HepG2 (cell line): ENCODE measurements at regions of chr6 and their contacts with region 1.

Region 1: GRCh38 chr6:17700421-17701416 is 6.0 kb downstream of the NUP153 start:
- DNase-seq: no peak
- ATAC-seq: no peak
- H3K4me3 ChIP-seq: no peak overlapping the region
- H3K27ac ChIP-seq: no peak overlapping the region
- H3K4me1 ChIP-seq: peaks cover 46% of the 10 kb centered on the region
- H3K27me3 ChIP-seq: no peaks in the 10 kb centered on the region; a peak in 1 of 5 replicates
- CTCF ChIP-seq: no peak
- EP300 ChIP-seq: no peak
- POLR2A ChIP-seq: no peak
- RAD21 ChIP-seq: no peak

Region 2: GRCh38 chr6:17803409-17803808 is 102.7 kb after region 1 on chr6:
- CTCF ChIA-PET with region 1: interaction called, 10 read pairs
- POLR2A ChIA-PET with region 1: no interaction called
- in situ Hi-C with region 1: no loop called
- intact Hi-C with region 1: loop called (anchors 5 kb)
- DNase-seq: peak; percentile 45
- ATAC-seq: peak; percentile 58
- H3K4me3 ChIP-seq: no peak overlapping the region
- H3K27ac ChIP-seq: no peak overlapping the region
- H3K4me1 ChIP-seq: peaks cover 24% of the 10 kb centered on the region
- H3K27me3 ChIP-seq: no peaks in the 10 kb centered on the region
- CTCF ChIP-seq: no peak
- EP300 ChIP-seq: no peak
- POLR2A ChIP-seq: no peak
- RAD21 ChIP-seq: no peak

Region 3: GRCh38 chr6:17816921-17817611 is 116.3 kb after region 1 on chr6:
- CTCF ChIA-PET with region 1: interaction called, 3 read pairs
- POLR2A ChIA-PET with region 1: no interaction called
- in situ Hi-C with region 1: no loop called
- intact Hi-C with region 1: loop called (anchors 5 kb)
- DNase-seq: peak; percentile 75
- ATAC-seq: peak; percentile 66
- H3K4me3 ChIP-seq: no peak overlapping the region
- H3K27ac ChIP-seq: no peak overlapping the region
- H3K4me1 ChIP-seq: peaks cover 14% of the 10 kb centered on the region
- H3K27me3 ChIP-seq: no peaks in the 10 kb centered on the region
- CTCF ChIP-seq: no peak; the same call in 1 of the 2 replicates
- EP300 ChIP-seq: no peak
- POLR2A ChIP-seq: no peak
- RAD21 ChIP-seq: no peak